Heart left ventricle (tissue), 16 donors: ENCODE measurements at regions of chr5 and their contacts with region 1.

Region 1: GRCh38 chr5:58505971-58506640 is 14.9 kb downstream of the GAPT start:
- DNase-seq: no peak
- ATAC-seq: no peak
- H3K4me3 ChIP-seq: no peak overlapping the region
- H3K27ac ChIP-seq: no peak overlapping the region
- H3K4me1 ChIP-seq: peaks cover 0 to 18% (median 0%) of the 10 kb centered on the region in 12 donors
- H3K27me3 ChIP-seq: peaks cover 0 to 10% (median 0%) of the 10 kb centered on the region in 9 donors
- CTCF ChIP-seq: no peak
- POLR2A ChIP-seq: no peak

Region 2: DNA sequence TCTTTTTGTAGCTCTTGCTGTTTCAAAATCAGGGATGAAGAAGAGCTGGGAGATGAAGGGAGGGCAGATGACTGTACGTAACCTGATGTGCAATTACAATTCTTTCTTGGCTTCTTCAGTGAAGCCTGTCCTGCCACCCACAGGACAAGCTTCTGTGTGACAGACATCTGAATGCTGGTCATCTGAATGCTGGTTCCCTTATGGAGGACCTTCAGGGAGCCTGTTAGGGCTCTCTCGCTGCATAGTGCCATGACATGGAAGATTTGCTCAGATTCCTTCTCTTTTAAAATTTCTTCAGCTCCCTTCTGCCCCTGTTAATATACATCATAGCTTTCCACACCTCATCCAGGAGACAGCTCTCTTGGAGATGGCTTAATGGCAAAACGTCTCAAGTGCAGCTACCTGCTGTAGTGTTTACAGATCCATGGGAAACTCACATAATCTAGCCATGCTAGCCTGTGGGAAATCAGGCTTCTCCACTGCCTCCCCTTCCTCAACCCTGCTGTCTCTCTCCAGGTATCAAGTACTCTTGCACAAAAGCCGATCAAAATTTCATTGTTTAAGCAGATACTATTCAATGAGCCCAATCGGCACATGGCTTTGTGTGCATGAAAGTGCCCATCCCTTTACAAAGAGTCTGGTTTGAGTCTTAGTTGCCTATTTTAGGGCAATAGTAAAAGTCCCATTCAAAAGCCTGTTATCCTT is 211.3 kb after region 1 on chr5:
- intact Hi-C with region 1: loop called in 1 of 10 experiments (anchors 10 kb)
- DNase-seq: no peak
- ATAC-seq: no peak
- H3K4me3 ChIP-seq: no peak overlapping the region
- H3K27ac ChIP-seq: no peak overlapping the region
- H3K4me1 ChIP-seq: peaks cover 0 to 5% (median 0%) of the 10 kb centered on the region in 12 donors
- H3K27me3 ChIP-seq: no peaks in the 10 kb centered on the region
- CTCF ChIP-seq: peak in 2 of 12 donors; percentile 9 to 21
- POLR2A ChIP-seq: no peak